Naive thymus-derived CD4-positive, alpha-beta T cell (primary cell): ENCODE measurements at regions of chr14 and their contacts with region 1.

Region 1: GRCh38 chr14:103333754-103334643 is at the start of gene EIF5:
- DNase-seq: peak; percentile 92 to 99 (median 99)
- ATAC-seq: peak; percentile 91
- H3K4me3 ChIP-seq: peak within 1 kb of the TSS; percentile 81
- H3K4me3 Mint-ChIP-seq: peak within 1 kb of the TSS; percentile 92 to 97 (median 96)
- H3K27ac ChIP-seq: peak within 1 kb of the TSS; percentile 99
- H3K27ac Mint-ChIP-seq: peak within 1 kb of the TSS; percentile 94 to 99 (median 98)
- H3K4me1 ChIP-seq: peaks cover 22 to 29% of the 10 kb centered on the region in 2 donors
- H3K4me1 Mint-ChIP-seq: peaks cover 23 to 61% (median 50%) of the 10 kb centered on the region in 7 donors
- H3K27me3 ChIP-seq: no peaks in the 10 kb centered on the region
- H3K27me3 Mint-ChIP-seq: peaks cover 0 to 4% (median 0%) of the 10 kb centered on the region in 5 donors
- total RNA-seq, gene EIF5: 182 to 716 (median 322) TPM

Region 2: DNA sequence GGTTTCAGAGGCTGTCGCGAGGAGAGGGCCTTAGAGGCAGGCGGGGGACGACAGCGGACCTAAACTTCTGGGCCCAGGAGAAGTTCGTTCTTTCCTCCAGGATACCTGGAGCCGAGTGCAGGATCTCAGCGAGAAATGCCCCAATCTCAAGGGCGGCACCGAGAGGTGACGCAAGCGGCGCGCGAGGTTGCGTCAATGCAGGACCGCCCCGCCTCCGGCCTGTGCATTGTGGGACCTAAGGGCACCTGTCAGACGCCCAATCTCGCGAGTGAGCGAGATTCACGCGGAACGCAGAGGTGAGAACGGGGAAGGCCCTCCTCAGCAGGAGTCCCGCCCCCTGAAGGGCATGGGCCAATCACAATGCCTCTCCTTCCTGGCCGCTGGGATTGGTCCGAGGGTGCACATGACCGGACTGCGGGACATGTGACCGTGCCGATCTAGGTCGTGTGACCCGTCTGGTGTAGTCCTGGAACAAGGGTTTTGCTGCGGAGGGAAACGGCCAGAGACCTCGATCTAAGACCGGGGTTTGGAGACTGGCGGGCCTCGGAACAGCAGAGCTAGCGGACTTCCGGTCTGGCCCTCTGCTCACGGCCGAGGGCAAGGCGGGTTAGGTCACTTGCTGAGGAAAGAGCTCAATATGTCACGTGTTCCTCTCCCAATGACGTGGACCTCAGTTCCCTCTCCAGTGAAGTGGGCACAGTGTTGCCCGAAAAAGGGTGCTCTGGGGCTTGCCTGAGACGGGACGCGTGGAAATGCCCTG is 1385.9 kb before region 1 on chr14:
- CTCF ChIA-PET with region 1: no interaction called
- POLR2A ChIA-PET with region 1: no interaction called
- intact Hi-C with region 1: loop called in 1 of 2 experiments (anchors 5 kb)
- DNase-seq: peak; percentile 95 to 100 (median 99)
- ATAC-seq: peak; percentile 97
- H3K4me3 ChIP-seq: peak overlapping the region; percentile 96
- H3K4me3 Mint-ChIP-seq: peak overlapping the region; percentile 86 to 99 (median 98)
- H3K27ac ChIP-seq: peak overlapping the region; percentile 99
- H3K27ac Mint-ChIP-seq: peak overlapping the region; percentile 97 to 100 (median 99)
- H3K4me1 ChIP-seq: peaks cover 9 to 10% of the 10 kb centered on the region in 2 donors
- H3K4me1 Mint-ChIP-seq: peaks cover 17 to 34% (median 25%) of the 10 kb centered on the region in 7 donors
- H3K27me3 ChIP-seq: no peaks in the 10 kb centered on the region
- H3K27me3 Mint-ChIP-seq: peaks cover 15 to 37% (median 30%) of the 10 kb centered on the region in 5 donors

Region 3: GRCh38 chr14:102774391-102775153 is 559.4 kb before region 1 on chr14:
- CTCF ChIA-PET with region 1: no interaction called
- POLR2A ChIA-PET with region 1: no interaction called
- intact Hi-C with region 1: loop called in 1 of 2 experiments (anchors 2 kb)
- DNase-seq: peak; percentile 39 to 85 (median 76)
- ATAC-seq: peak; percentile 52
- H3K4me3 ChIP-seq: no peak overlapping the region
- H3K4me3 Mint-ChIP-seq: peak overlapping the region; percentile 48 to 79 (median 63)
- H3K27ac ChIP-seq: peak overlapping the region; percentile 79
- H3K27ac Mint-ChIP-seq: peak overlapping the region; percentile 83 to 97 (median 92)
- H3K4me1 ChIP-seq: peaks cover 13 to 30% of the 10 kb centered on the region in 2 donors
- H3K4me1 Mint-ChIP-seq: peaks cover 14 to 44% (median 35%) of the 10 kb centered on the region in 7 donors
- H3K27me3 ChIP-seq: no peaks in the 10 kb centered on the region
- H3K27me3 Mint-ChIP-seq: no peaks in the 10 kb centered on the region

Region 4: GRCh38 chr14:103346286-103346685 is 12.3 kb after region 1 on chr14:
- CTCF ChIA-PET with region 1: no interaction called
- POLR2A ChIA-PET with region 1: interaction called, 73 read pairs
- intact Hi-C with region 1: loop called in 1 of 2 experiments (anchors 1 kb)
- DNase-seq: no peak
- ATAC-seq: no peak
- H3K4me3 ChIP-seq: no peak overlapping the region
- H3K4me3 Mint-ChIP-seq: no peak overlapping the region
- H3K27ac ChIP-seq: no peak overlapping the region
- H3K27ac Mint-ChIP-seq: peak overlapping the region in 4 of 9 donors; percentile 21 to 71 (median 36)
- H3K4me1 ChIP-seq: no peaks in the 10 kb centered on the region
- H3K4me1 Mint-ChIP-seq: peaks cover 0 to 22% (median 3%) of the 10 kb centered on the region in 7 donors
- H3K27me3 ChIP-seq: no peaks in the 10 kb centered on the region
- H3K27me3 Mint-ChIP-seq: peaks cover 0 to 2% (median 0%) of the 10 kb centered on the region in 5 donors

Region 5: GRCh38 chr14:103460415-103460814 is 126.4 kb after region 1 on chr14:
- CTCF ChIA-PET with region 1: no interaction called
- POLR2A ChIA-PET with region 1: interaction called, 10 read pairs
- intact Hi-C with region 1: no loop called
- DNase-seq: peak in 6 of 9 donors; percentile 3 to 51 (median 36)
- ATAC-seq: no peak
- H3K4me3 ChIP-seq: no peak overlapping the region
- H3K4me3 Mint-ChIP-seq: peak overlapping the region in 8 of 10 donors; percentile 56 to 80 (median 66)
- H3K27ac ChIP-seq: no peak overlapping the region
- H3K27ac Mint-ChIP-seq: peak overlapping the region in 8 of 9 donors; percentile 41 to 86 (median 68)
- H3K4me1 ChIP-seq: peaks cover 0 to 12% of the 10 kb centered on the region in 2 donors
- H3K4me1 Mint-ChIP-seq: peaks cover 10 to 45% (median 32%) of the 10 kb centered on the region in 7 donors
- H3K27me3 ChIP-seq: no peaks in the 10 kb centered on the region
- H3K27me3 Mint-ChIP-seq: no peaks in the 10 kb centered on the region

Region 6: DNA sequence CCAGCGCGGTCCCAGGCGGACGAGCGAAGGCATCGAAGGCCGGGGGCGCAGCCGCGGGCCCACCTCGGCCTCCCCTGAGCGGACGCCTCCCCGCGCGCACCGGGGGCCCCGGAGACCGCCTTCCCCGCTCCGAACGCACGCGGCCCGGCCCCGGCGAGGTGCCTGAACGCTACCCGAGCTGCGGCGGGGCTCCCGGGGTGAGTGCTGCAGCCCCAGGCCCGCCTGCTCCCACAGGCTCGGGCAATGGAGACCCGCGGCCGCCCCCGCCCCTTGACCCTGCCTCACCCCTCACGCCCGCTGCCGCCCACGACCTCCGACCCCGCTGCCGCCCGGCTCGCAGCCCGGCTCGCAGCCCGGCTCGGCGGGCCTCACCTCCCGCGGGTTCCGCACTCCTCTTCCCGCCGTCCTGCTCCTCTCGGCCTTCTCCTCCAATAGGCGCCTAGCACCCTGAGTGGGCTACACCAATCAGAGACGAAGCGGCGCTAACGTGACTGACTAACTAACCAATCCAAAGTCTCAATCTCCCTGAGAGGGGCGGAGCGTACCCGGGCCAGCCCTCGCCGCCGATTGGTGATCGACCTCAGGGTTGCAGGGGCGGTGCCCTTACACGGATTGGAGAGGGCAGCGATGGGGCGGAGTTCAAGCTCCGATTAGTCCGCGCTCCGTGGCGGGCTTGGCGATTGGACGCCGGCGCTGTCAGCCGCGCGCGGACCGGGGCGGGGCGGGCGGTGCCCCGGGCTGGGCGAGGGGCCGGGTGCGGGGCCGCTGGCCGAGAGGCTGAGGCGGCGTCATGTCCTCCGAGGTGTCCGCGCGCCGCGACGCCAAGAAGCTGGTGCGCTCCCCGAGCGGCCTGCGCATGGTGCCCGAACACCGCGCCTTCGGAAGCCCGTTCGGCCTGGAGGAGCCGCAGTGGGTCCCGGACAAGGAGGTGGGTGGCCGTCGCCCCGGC is 381.3 kb after region 1 on chr14 and contains the starts of genes XRCC3 and ZFYVE21:
- CTCF ChIA-PET with region 1: no interaction called
- POLR2A ChIA-PET with region 1: no interaction called
- intact Hi-C with region 1: loop called in 1 of 2 experiments (anchors 2 kb)
- DNase-seq: peak; percentile 96 to 100 (median 100)
- ATAC-seq: peak; percentile 97
- H3K4me3 ChIP-seq: peak within 1 kb of the TSS; percentile 56
- H3K4me3 Mint-ChIP-seq: peak within 1 kb of the TSS; percentile 89 to 98 (median 94)
- H3K27ac ChIP-seq: peak within 1 kb of the TSS; percentile 73
- H3K27ac Mint-ChIP-seq: peak within 1 kb of the TSS; percentile 40 to 95 (median 91)
- H3K4me1 ChIP-seq: peaks cover 8 to 13% of the 10 kb centered on the region in 2 donors
- H3K4me1 Mint-ChIP-seq: peaks cover 38 to 69% (median 52%) of the 10 kb centered on the region in 7 donors
- H3K27me3 ChIP-seq: no peaks in the 10 kb centered on the region
- H3K27me3 Mint-ChIP-seq: peaks cover 0 to 2% (median 0%) of the 10 kb centered on the region in 5 donors
- total RNA-seq, gene XRCC3: 9.3 to 38.9 (median 15.9) TPM
- total RNA-seq, gene ZFYVE21: 5.8 to 19.0 (median 16.8) TPM